Activated CD4-positive, alpha-beta T cell treated with anti-CD3 and anti-CD28 coated beads for 36 hours (primary cell): ENCODE measurements at regions of chr7 and their contacts with region 1.

Region 1: GRCh38 chr7:36600869-36601530 is 123.3 kb downstream of the AOAH start:
- DNase-seq: peak; percentile 52
- ATAC-seq: peak; percentile 89
- H3K4me3 Mint-ChIP-seq: no peak overlapping the region
- H3K27ac Mint-ChIP-seq: peak overlapping the region; percentile 35
- H3K4me1 Mint-ChIP-seq: peaks cover 65% of the 10 kb centered on the region
- H3K27me3 Mint-ChIP-seq: no peaks in the 10 kb centered on the region

Region 2: DNA sequence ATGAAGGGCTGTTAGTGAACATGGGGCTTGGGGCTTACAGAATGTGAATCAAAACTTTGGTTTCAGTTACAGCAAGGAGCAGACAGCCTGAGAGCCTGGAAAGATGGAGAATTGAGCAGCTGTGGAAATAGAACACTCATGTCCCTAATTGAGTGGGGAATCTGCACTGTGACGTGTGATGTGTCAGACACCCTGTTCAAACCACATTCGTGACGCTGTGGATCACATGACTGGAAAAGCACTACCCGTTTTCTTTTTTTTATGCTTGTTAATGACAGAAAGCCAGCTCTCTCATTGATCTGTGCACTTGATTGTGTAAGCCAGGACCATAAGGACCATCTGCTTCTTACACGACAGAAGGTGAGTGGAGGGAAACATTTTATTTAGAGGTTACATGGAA is 1332.0 kb before region 1 on chr7:
- CTCF ChIA-PET with region 1: no interaction called
- POLR2A ChIA-PET with region 1: no interaction called
- intact Hi-C with region 1: no loop called
- DNase-seq: no peak
- ATAC-seq: no peak
- H3K4me3 Mint-ChIP-seq: no peak overlapping the region
- H3K27ac Mint-ChIP-seq: no peak overlapping the region
- H3K4me1 Mint-ChIP-seq: no peaks in the 10 kb centered on the region
- H3K27me3 Mint-ChIP-seq: peaks cover 43% of the 10 kb centered on the region

Region 3: DNA sequence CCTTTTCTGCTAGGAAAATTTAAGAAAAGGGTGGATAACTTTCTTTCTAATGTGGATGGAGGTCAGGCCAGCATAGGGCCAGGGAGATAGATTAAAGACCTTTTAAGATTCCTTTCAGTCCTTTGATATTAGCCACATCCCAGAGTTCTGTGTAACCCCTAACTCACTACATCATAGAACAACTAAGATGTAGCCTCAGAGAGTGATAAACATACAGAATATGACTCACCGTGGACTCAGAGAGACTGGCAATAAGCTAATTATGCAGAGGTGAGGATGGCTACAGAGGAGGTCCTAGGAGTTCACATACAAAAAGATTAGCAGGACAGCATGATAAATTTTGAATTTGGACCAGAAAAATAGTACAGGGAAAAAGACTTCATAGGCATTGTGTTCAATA is 17.7 kb before region 1 on chr7:
- CTCF ChIA-PET with region 1: interaction called, 3 read pairs
- POLR2A ChIA-PET with region 1: interaction called, 3 read pairs
- intact Hi-C with region 1: loop called (anchors 1 kb)
- DNase-seq: no peak
- ATAC-seq: peak; percentile 87
- H3K4me3 Mint-ChIP-seq: no peak overlapping the region
- H3K27ac Mint-ChIP-seq: peak overlapping the region; percentile 79
- H3K4me1 Mint-ChIP-seq: peaks cover 19% of the 10 kb centered on the region
- H3K27me3 Mint-ChIP-seq: no peaks in the 10 kb centered on the region